ENCODE measurements at regions of chr9 and their contacts with region 1.

Region 1: DNA sequence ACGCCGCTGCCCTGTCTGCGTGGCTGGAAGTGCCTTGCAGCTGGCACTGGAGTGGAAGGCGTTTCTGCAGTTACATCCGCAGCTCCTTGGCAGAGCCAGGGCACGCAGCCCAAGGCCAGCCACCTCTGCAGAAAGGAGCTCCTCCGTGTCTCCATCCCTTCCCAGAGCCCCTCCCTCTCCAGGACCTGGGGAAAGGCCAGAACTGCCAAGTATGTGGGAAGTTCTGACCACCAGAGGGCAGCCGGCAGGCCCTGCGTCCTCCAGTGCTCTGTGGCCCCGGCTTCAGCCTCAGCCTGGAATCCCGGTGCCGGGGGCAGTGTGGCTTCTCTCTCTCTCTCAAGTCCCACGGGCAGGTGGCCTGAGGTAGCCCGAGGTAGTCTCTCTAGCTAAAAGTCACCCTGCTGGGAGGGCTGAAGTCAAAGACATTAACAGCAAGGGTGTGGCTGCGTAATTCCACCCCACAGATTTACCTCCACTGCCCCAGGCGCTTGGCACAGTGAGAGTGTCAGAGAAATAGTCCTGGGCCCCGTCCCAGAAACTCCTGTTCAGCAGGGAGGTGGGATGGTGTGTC is 101.7 kb upstream of the FCN2 start:
- DNase-seq: peak; percentile 60 to 65
- ATAC-seq: peak; percentile 63 to 84 (median 74)
- H3K4me3 ChIP-seq: no peak overlapping the region
- H3K27ac ChIP-seq: no peak overlapping the region
- H3K4me1 ChIP-seq: peaks cover 2 to 35% (median 22%) of the 10 kb centered on the region in 9 donors
- H3K27me3 ChIP-seq: no peaks in the 10 kb centered on the region
- CTCF ChIP-seq: peak; percentile 59 to 82 (median 74)

Region 2: GRCh38 chr9:134896005-134896833 is 117.3 kb after region 1 on chr9:
- intact Hi-C with region 1: loop called in 3 of 10 experiments (anchors 5 to 10 kb)
- DNase-seq: peak; percentile 52 to 76
- ATAC-seq: peak; percentile 76 to 90 (median 87)
- H3K4me3 ChIP-seq: no peak overlapping the region
- H3K27ac ChIP-seq: peak overlapping the region; percentile 44 to 85 (median 80)
- H3K4me1 ChIP-seq: peaks cover 8 to 45% (median 34%) of the 10 kb centered on the region in 9 donors
- H3K27me3 ChIP-seq: no peaks in the 10 kb centered on the region
- CTCF ChIP-seq: no peak

Region 3: GRCh38 chr9:134968011-134968822 is 189.3 kb after region 1 on chr9:
- intact Hi-C with region 1: loop called in 1 of 10 experiments (anchors 10 kb)
- DNase-seq: no peak
- ATAC-seq: peak in 5 of 8 donors; percentile 45 to 75 (median 64)
- H3K4me3 ChIP-seq: no peak overlapping the region
- H3K27ac ChIP-seq: no peak overlapping the region
- H3K4me1 ChIP-seq: peaks cover 0 to 13% (median 5%) of the 10 kb centered on the region in 9 donors
- H3K27me3 ChIP-seq: peaks cover 7 to 62% (median 32%) of the 10 kb centered on the region in 7 donors
- CTCF ChIP-seq: no peak

Region 4: GRCh38 chr9:135077497-135078200 is 298.7 kb after region 1 on chr9:
- intact Hi-C with region 1: loop called in 3 of 10 experiments (anchors 10 kb)
- DNase-seq: no peak
- ATAC-seq: peak in 1 of 8 donors; percentile 43
- H3K4me3 ChIP-seq: no peak overlapping the region
- H3K27ac ChIP-seq: no peak overlapping the region
- H3K4me1 ChIP-seq: peaks cover 0 to 19% (median 12%) of the 10 kb centered on the region in 9 donors
- H3K27me3 ChIP-seq: peaks cover 0 to 35% (median 3%) of the 10 kb centered on the region in 7 donors
- CTCF ChIP-seq: no peak

Region 5: DNA sequence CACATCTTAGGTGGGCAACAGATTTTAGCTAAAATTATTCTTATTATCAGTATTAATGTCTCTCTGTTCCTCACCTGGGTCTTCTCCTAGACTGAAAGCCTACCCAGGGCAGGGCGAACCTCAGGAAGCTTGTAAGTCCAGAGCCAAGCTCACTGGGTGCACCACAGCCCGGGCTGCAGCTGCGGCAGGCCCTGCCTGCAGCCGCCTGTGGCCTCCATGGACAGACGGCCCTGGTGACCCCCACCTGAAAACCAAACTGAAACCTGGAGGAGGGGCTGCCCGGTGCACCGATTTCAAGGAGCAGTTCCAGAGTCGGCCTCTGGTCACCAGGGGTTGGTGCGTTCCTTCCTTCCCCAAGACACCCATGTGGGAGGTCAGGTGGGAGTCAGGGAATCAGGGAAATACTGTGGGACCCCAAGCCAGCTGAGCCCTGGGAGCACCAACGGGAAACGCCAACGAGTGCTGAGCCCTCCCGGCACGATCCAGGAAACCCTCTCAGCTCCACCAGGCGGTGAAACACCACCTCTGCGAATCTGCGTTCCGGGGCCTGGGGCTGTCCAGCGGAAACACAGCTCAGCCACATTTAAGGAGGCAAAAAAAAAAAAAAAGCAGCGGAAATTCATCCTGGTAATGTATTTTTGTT is 632.0 kb after region 1 on chr9:
- intact Hi-C with region 1: loop called in 1 of 10 experiments (anchors 10 kb)
- DNase-seq: no peak
- ATAC-seq: no peak
- H3K4me3 ChIP-seq: no peak overlapping the region
- H3K27ac ChIP-seq: no peak overlapping the region
- H3K4me1 ChIP-seq: peaks cover 0 to 5% (median 0%) of the 10 kb centered on the region in 9 donors
- H3K27me3 ChIP-seq: peaks cover 3 to 57% (median 44%) of the 10 kb centered on the region in 7 donors
- CTCF ChIP-seq: no peak

Measured in heart right ventricle (tissue), 16 donors.